HCT116 (cell line): ENCODE measurements at regions of chr1 and their contacts with region 1.

Region 1: GRCh38 chr1:119184972-119185371 is 44.5 kb upstream of the WARS2 start:
- DNase-seq: no peak
- ATAC-seq: no peak
- H3K4me3 ChIP-seq: no peak overlapping the region
- H3K27ac ChIP-seq: no peak overlapping the region
- H3K4me1 ChIP-seq: no peaks in the 10 kb centered on the region
- H3K27me3 ChIP-seq: no peaks in the 10 kb centered on the region
- CTCF ChIP-seq: peak in 1 of 3 experiments; percentile 25; a peak in 1 of 6 replicates
- POLR2A ChIP-seq: no peak
- RAD21 ChIP-seq: no peak

Region 2: GRCh38 chr1:118890851-118891384 is 294.1 kb before region 1 on chr1:
- CTCF ChIA-PET with region 1: no interaction called
- POLR2A ChIA-PET with region 1: no interaction called
- RAD21 ChIA-PET with region 1: no interaction called
- intact Hi-C with region 1: no loop called
- DNase-seq: no peak
- ATAC-seq: no peak
- H3K4me3 ChIP-seq: no peak overlapping the region
- H3K27ac ChIP-seq: no peak overlapping the region
- H3K4me1 ChIP-seq: no peaks in the 10 kb centered on the region
- H3K27me3 ChIP-seq: no peaks in the 10 kb centered on the region
- CTCF ChIP-seq: no peak
- POLR2A ChIP-seq: no peak
- RAD21 ChIP-seq: no peak

Region 3: DNA sequence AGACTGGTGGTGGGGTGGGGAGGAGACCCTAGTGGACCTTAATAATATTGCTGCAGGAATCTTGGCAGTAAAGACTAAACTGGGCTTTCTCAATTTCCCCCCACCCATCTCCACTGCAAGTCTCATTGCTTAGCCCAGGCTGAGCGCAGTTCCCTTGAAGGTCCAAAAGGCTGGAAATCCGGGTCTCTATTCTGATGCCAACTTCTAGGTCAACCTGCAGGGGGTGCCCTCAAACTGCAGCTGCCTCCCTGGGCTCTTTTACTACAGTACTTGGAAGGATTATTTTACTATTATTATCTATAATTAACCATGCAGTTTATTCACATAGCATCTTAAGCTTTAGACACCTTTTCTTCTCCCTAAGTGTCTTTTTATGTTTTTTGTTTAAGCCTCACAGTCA is 40.9 kb after region 1 on chr1:
- CTCF ChIA-PET with region 1: no interaction called
- POLR2A ChIA-PET with region 1: no interaction called
- RAD21 ChIA-PET with region 1: no interaction called
- intact Hi-C with region 1: loop called (anchors 5 kb)
- DNase-seq: no peak
- ATAC-seq: no peak
- H3K4me3 ChIP-seq: no peak overlapping the region
- H3K27ac ChIP-seq: no peak overlapping the region
- H3K4me1 ChIP-seq: no peaks in the 10 kb centered on the region
- H3K27me3 ChIP-seq: no peaks in the 10 kb centered on the region
- CTCF ChIP-seq: peak in 2 of 3 experiments; percentile 40; a peak in 2 of 6 replicates
- POLR2A ChIP-seq: no peak
- RAD21 ChIP-seq: peak; percentile 16; the same call in 1 of the 2 replicates

Region 4: GRCh38 chr1:119409731-119410130 is 224.8 kb after region 1 on chr1:
- CTCF ChIA-PET with region 1: no interaction called
- POLR2A ChIA-PET with region 1: no interaction called
- RAD21 ChIA-PET with region 1: no interaction called
- intact Hi-C with region 1: no loop called
- DNase-seq: no peak
- ATAC-seq: no peak
- H3K4me3 ChIP-seq: no peak overlapping the region
- H3K27ac ChIP-seq: no peak overlapping the region
- H3K4me1 ChIP-seq: no peaks in the 10 kb centered on the region
- H3K27me3 ChIP-seq: no peaks in the 10 kb centered on the region; the same call in 1 of the 2 replicates
- CTCF ChIP-seq: no peak
- POLR2A ChIP-seq: no peak
- RAD21 ChIP-seq: no peak